Right cardiac atrium (tissue), 5 donors: ENCODE measurements at regions of chr11 and their contacts with region 1.

Region 1: DNA sequence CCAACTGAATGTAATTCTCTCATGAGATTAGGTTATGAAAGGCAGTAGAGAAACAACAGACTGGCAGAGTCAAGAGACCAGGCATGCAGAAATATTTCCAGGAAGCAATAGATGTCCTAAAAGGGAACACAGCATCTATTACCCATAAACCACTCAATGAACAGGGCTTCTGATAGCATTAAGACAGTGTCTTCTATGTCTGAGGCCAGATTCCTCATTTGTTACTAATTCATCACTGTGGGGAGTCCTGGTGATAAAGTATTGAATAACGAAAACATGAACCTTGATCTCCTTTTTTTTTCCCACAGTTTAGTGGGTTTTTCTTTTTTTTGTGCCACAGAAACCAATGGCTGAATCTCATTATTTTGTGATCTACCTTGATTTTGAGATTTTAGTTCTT is 339.0 kb downstream of the METTL15 start:
- DNase-seq: no peak
- ATAC-seq: no peak
- H3K4me3 ChIP-seq: no peak overlapping the region
- H3K27ac ChIP-seq: no peak overlapping the region
- H3K4me1 ChIP-seq: no peaks in the 10 kb centered on the region
- H3K27me3 ChIP-seq: no peaks in the 10 kb centered on the region

Region 2: DNA sequence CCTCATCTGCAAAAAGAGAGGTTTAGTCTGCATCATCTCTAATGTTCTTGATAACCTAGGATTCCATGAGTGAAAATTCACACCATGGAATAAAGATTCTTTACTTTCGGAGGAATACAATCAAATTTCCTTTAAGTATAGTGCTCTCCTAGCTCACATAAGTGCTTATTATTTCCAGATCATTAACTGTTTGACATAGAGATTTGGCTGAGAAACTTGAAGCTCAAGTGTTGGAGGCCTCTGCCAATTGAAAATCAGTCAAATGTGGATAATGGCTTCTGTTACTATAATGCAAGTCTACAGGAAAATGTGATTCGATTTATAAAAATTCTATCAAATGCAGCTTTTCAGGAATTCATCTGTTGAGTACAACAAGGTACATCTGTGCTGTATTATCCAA is 483.9 kb before region 1 on chr11:
- intact Hi-C with region 1: loop called in 1 of 4 experiments (anchors 10 kb)
- DNase-seq: no peak
- ATAC-seq: no peak
- H3K4me3 ChIP-seq: no peak overlapping the region
- H3K27ac ChIP-seq: no peak overlapping the region
- H3K4me1 ChIP-seq: no peaks in the 10 kb centered on the region
- H3K27me3 ChIP-seq: no peaks in the 10 kb centered on the region

Region 3: GRCh38 chr11:28296426-28296825 is 150.8 kb before region 1 on chr11:
- intact Hi-C with region 1: no loop called
- DNase-seq: no peak
- ATAC-seq: no peak
- H3K4me3 ChIP-seq: no peak overlapping the region
- H3K27ac ChIP-seq: no peak overlapping the region
- H3K4me1 ChIP-seq: no peaks in the 10 kb centered on the region
- H3K27me3 ChIP-seq: no peaks in the 10 kb centered on the region

Region 4: GRCh38 chr11:28713850-28714249 is 266.6 kb after region 1 on chr11:
- intact Hi-C with region 1: no loop called
- DNase-seq: no peak
- ATAC-seq: no peak
- H3K4me3 ChIP-seq: no peak overlapping the region
- H3K27ac ChIP-seq: no peak overlapping the region
- H3K4me1 ChIP-seq: no peaks in the 10 kb centered on the region
- H3K27me3 ChIP-seq: no peaks in the 10 kb centered on the region